Psoas muscle (tissue), 8 donors: ENCODE measurements at regions of chr7 and their contacts with region 1.

Region 1: GRCh38 chr7:98280791-98281756 is at the start of gene BRI3:
- DNase-seq: peak; percentile 95
- ATAC-seq: peak; percentile 59 to 65 (median 62)
- H3K4me3 ChIP-seq: peak within 1 kb of the TSS; percentile 90
- H3K27ac ChIP-seq: peak within 1 kb of the TSS; percentile 99
- H3K4me1 ChIP-seq: peaks cover 33% of the 10 kb centered on the region
- H3K27me3 ChIP-seq: no peaks in the 10 kb centered on the region
- CTCF ChIP-seq: peak; percentile 35
- total RNA-seq, gene BRI3: 231 to 529 (median 366) TPM

Region 2: GRCh38 chr7:97680622-97681021 is 600.5 kb before region 1 on chr7:
- intact Hi-C with region 1: no loop called
- DNase-seq: no peak
- ATAC-seq: no peak
- H3K4me3 ChIP-seq: no peak overlapping the region
- H3K27ac ChIP-seq: no peak overlapping the region
- H3K4me1 ChIP-seq: no peaks in the 10 kb centered on the region
- H3K27me3 ChIP-seq: no peaks in the 10 kb centered on the region
- CTCF ChIP-seq: no peak

Region 3: DNA sequence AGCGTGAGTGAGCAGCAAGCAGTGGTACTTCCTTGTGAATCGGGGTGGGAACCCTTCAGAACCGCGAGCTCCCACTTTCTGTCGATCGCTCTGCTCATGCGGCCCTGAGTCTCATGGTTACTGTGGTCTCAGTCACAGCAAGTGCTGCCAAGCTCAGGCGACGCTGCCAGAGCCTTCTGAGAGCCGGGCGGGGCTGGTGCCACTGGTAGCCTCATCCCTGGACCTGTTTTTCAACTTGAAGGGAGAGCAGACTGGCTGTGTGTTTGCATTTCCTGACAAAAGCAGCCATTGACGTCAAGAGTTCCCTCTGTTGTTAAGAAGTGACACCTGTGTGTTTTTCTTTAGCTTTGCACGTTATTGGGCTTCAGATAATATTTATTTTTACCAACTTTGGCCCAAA is 102.7 kb before region 1 on chr7:
- intact Hi-C with region 1: loop called (anchors 5 kb)
- DNase-seq: peak; percentile 57 to 91
- ATAC-seq: peak; percentile 76 to 86 (median 82)
- H3K4me3 ChIP-seq: peak overlapping the region; percentile 56
- H3K27ac ChIP-seq: peak overlapping the region; percentile 80
- H3K4me1 ChIP-seq: peaks cover 45% of the 10 kb centered on the region
- H3K27me3 ChIP-seq: no peaks in the 10 kb centered on the region
- CTCF ChIP-seq: no peak

Region 4: GRCh38 chr7:98251841-98252639 is 29.0 kb before region 1 on chr7 and contains the start of gene TECPR1:
- intact Hi-C with region 1: loop called in 1 of 2 experiments (anchors 1 kb)
- DNase-seq: peak; percentile 97 to 98
- ATAC-seq: peak; percentile 99 to 100 (median 100)
- H3K4me3 ChIP-seq: peak within 1 kb of the TSS; percentile 84
- H3K27ac ChIP-seq: peak within 1 kb of the TSS; percentile 84
- H3K4me1 ChIP-seq: peaks cover 17% of the 10 kb centered on the region
- H3K27me3 ChIP-seq: no peaks in the 10 kb centered on the region
- CTCF ChIP-seq: no peak
- total RNA-seq, gene TECPR1: 10.0 to 23.0 (median 18.6) TPM

Region 5: DNA sequence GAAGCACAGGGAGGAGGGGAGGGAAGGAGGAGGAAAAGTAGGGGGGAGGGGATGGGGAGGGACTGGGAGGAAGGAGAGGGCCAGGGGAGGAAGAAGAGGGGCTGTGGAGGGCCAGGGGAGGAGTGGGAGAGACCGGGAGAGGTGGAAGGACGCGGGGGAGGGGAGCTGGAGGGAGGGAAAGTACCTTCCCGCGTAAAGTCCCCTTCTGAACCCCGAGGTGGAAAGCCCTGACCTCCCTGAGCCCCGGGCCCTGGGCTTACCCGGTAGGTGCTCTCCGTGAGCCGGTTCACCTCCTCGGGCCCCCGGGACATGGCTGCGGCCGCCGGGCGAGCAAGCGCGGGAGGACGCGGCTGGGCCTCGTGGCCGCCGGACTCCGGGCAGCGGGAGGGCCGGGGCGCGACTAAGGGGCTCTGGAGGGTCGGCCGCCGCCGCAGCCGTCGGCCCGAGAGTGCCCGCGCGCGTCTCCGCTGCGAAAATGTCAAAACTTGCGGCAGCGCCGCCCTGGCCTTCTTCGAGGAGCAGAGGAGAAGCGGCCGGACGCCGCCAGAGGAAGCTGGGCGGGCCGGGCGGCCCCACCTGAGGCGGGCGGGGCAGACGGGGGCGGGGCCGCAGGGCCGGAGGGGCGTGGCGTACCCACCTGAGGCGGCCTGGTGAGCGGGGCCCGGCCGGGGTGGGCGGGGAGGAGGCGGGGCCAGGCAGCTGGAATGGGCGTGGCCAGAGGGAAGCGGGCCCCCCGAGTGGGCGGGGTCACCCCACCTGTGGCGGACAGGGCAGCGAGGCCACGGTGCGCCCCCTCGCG is 119.7 kb after region 1 on chr7 and contains the start of gene BAIAP2L1:
- intact Hi-C with region 1: loop called in 1 of 2 experiments (anchors 10 kb)
- DNase-seq: peak; percentile 75 to 82
- ATAC-seq: peak; percentile 84 to 95 (median 89)
- H3K4me3 ChIP-seq: peak within 1 kb of the TSS; percentile 70
- H3K27ac ChIP-seq: no peak within 1 kb of the TSS
- H3K4me1 ChIP-seq: no peaks in the 10 kb centered on the region
- H3K27me3 ChIP-seq: peaks cover 0 to 28% (median 5%) of the 10 kb centered on the region in 3 donors
- CTCF ChIP-seq: peak; percentile 51
- total RNA-seq, gene BAIAP2L1: 0.80 to 3.0 (median 1.7) TPM